ENCODE measurements at regions of chr11 and their contacts with region 1.

Region 1: GRCh38 chr11:45475173-45475572 is 189.0 kb upstream of the SYT13 start:
- DNase-seq: no peak
- H3K4me3 ChIP-seq: no peak overlapping the region
- H3K27ac ChIP-seq: no peak overlapping the region
- H3K4me1 ChIP-seq: peaks cover 0 to 2% (median 0%) of the 10 kb centered on the region in 4 experiments; a peak in 2 of 7 replicates
- H3K27me3 ChIP-seq: no peaks in the 10 kb centered on the region
- CTCF ChIP-seq: no peak
- EP300 ChIP-seq: no peak
- POLR2A ChIP-seq: no peak
- RAD21 ChIP-seq: no peak

Region 2: GRCh38 chr11:45485070-45485707 is 10.0 kb after region 1 on chr11:
- CTCF ChIA-PET with region 1: interaction called, 11 read pairs
- POLR2A ChIA-PET with region 1: interaction called, 6 read pairs
- DNase-seq: no peak
- H3K4me3 ChIP-seq: no peak overlapping the region
- H3K27ac ChIP-seq: no peak overlapping the region
- H3K4me1 ChIP-seq: peaks cover 0 to 12% (median 3%) of the 10 kb centered on the region in 4 experiments; a peak in 3 of 7 replicates
- H3K27me3 ChIP-seq: no peaks in the 10 kb centered on the region; a peak in 1 of 7 replicates
- CTCF ChIP-seq: no peak
- EP300 ChIP-seq: no peak
- POLR2A ChIP-seq: no peak
- RAD21 ChIP-seq: no peak

Measured in H1 (cell line).